ENCODE measurements at regions of chr4 and their contacts with region 1.

Region 1: GRCh38 chr4:173013232-173013930 is 155.2 kb upstream of the GALNT7 start:
- H3K4me3 ChIP-seq: no peak overlapping the region
- H3K27ac ChIP-seq: no peak overlapping the region
- H3K4me1 ChIP-seq: no peaks in the 10 kb centered on the region
- CTCF ChIP-seq: no peak

Region 2: DNA sequence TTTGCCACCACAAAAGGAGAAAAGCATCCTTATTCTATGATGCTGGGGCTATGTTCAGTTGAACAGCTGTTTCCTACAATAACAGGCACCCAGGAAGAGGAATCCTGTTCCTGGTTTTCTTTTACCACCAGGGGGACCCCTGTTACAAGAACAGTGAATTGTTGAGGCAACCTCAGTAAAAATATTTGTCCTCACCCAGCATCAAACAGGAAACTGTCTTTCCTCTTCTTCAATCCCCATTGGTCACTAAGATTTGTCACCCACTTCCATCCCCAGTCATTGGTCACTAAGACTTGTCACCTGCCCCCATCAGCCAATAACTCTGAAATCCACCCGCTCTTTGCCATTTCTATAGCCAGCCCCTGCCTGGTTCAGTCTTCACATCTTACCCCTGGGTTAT is 11.8 kb after region 1 on chr4:
- CTCF ChIA-PET with region 1: interaction called, 12 read pairs
- POLR2A ChIA-PET with region 1: no interaction called
- H3K4me3 ChIP-seq: no peak overlapping the region
- H3K27ac ChIP-seq: no peak overlapping the region
- H3K4me1 ChIP-seq: no peaks in the 10 kb centered on the region
- CTCF ChIP-seq: peak; percentile 33

Measured in HEK293 (cell line).